Activated CD4-positive, alpha-beta T cell treated with anti-CD3 and anti-CD28 coated beads for 36 hours (primary cell): ENCODE measurements at regions of chr3 and their contacts with region 1.

Region 1: DNA sequence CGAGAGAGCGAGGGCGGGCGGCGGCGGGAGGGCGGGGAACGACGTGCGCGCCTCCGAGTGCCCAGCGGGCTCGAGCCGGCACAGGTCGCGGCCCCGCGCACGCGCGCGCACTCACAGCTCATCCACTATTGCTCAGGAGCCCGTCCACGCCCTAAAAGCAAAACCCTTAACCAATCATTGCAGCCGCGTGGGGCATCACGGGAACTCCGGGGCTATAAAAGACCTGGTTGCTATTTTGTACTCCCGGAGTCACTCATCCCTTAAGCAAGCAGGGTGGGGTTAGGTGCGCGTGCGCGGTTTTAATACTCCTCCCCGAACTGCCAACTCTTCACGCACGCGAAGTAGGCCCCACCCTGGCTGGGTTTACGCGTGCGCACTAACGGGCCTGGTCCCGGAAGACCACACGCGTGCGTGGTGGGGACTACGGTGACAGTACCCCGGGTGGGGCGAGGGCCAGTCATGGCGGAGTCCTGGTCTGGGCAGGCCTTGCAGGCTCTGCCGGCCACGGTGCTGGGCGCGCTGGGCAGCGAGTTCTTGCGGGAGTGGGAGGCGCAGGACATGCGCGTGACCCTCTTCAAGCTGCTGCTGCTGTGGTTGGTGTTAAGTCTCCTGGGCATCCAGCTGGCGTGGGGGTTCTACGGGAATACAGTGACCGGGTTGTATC is at the starts of genes RHOA and TCTA:
- DNase-seq: peak; percentile 99
- ATAC-seq: peak; percentile 88
- H3K4me3 Mint-ChIP-seq: peak within 1 kb of the TSS; percentile 97
- H3K27ac Mint-ChIP-seq: peak within 1 kb of the TSS; percentile 97
- H3K4me1 Mint-ChIP-seq: peaks cover 63% of the 10 kb centered on the region
- H3K27me3 Mint-ChIP-seq: no peaks in the 10 kb centered on the region
- total RNA-seq, gene RHOA: 438 to 449 TPM
- total RNA-seq, gene TCTA: 9.4 TPM

Region 2: DNA sequence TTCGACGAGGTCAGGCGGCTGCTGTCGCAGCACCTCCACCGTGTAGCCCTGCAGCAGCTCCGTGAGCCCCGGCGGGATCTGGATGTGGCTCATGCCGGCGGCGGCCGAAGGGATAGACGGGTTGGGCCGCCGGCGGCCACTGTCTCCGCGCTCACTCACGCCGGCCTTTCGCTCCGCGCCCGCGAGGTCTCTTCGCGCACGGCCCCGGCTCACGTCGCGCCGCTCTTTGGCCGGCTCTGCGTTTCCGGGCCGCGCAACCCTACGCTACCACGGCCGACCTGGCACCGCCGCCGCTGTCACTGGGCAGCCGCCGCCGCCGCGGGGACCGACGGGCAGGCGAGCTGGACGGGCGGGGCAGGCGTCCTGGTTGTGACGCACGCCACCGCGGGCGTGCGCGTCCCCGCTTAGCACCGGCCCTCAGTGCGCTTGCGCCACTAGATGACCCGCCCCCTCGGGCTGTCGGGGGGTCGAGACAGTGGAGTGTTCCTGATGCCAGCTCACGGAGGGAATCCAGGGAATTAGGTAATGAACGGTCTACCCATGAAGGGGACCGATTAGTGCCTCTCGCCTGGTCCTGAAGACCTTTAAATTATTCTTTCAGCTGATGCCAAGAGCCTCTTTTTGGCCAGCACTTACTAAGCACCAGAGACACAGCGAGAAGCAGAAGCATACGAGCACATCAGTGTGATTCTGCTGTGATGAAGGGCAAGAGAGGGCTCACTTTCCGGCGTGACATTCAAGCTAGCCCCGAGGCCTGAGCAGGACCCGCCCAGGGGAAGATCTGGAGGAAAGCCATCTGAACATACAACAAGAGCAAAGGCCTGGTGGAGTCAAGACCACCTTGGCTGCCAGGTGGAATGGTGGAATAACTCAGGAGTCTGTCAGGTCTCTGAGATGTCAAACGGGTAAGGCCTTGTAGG is 564.3 kb before region 1 on chr3 and contains the start of gene PRKAR2A:
- CTCF ChIA-PET with region 1: no interaction called
- POLR2A ChIA-PET with region 1: no interaction called
- intact Hi-C with region 1: loop called in 1 of 2 experiments (anchors 1 kb)
- DNase-seq: peak; percentile 89
- ATAC-seq: peak; percentile 89
- H3K4me3 Mint-ChIP-seq: peak within 1 kb of the TSS; percentile 82
- H3K27ac Mint-ChIP-seq: peak within 1 kb of the TSS; percentile 87
- H3K4me1 Mint-ChIP-seq: peaks cover 26% of the 10 kb centered on the region
- H3K27me3 Mint-ChIP-seq: no peaks in the 10 kb centered on the region
- total RNA-seq, gene PRKAR2A: 28.7 to 35.2 TPM

Region 3: DNA sequence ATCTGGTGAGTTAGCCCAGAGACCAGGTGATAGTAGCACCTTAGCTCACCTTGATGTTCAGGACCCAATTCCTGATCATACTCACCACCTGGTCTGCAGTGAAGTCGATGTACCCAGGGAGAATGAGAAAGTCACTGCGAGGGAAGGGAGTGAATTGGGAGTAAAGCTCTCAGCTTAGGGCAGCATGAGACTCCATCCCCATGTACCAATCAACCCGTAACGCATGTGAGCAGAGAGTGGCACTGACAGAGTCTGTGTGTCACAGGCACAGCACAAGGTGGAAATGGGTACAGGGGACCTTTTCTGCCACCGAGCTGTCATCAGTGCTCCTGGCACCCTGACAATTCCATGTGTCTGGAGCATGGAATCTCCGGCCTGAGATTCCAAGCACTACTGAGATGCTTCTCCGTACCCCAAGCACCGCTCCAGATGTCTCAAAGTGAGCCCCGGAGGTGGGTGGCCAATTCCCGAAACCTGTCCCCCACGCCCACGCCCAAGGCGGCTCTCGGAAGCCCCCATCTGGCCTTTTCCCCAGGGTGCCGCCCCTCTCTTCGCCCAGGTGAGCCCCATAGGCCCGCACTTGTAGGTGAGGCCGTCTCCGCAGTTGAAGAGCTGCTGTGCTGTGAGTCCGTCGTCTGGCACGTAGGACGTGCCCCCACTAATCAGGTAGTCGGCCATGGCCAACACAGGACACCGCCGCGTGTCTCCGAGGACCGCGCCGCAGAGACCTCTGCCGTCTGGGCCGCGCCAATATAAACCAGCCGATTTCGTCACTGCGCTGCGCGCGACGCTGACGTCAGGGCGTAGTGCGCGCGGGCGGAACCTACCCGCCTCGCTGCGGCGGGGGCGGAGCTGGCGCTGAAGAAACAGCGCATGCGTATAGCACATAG is 383.2 kb before region 1 on chr3 and contains the start of gene IMPDH2:
- CTCF ChIA-PET with region 1: no interaction called
- POLR2A ChIA-PET with region 1: interaction called, 3 read pairs
- intact Hi-C with region 1: loop called in 1 of 2 experiments (anchors 1 kb)
- DNase-seq: peak; percentile 96
- ATAC-seq: peak; percentile 93
- H3K4me3 Mint-ChIP-seq: peak within 1 kb of the TSS; percentile 89
- H3K27ac Mint-ChIP-seq: peak within 1 kb of the TSS; percentile 97
- H3K4me1 Mint-ChIP-seq: peaks cover 53% of the 10 kb centered on the region
- H3K27me3 Mint-ChIP-seq: no peaks in the 10 kb centered on the region
- total RNA-seq, gene IMPDH2: 504 to 515 TPM

Region 4: GRCh38 chr3:49120438-49121131 is 291.5 kb before region 1 on chr3 and contains the start of gene USP19:
- CTCF ChIA-PET with region 1: no interaction called
- POLR2A ChIA-PET with region 1: no interaction called
- intact Hi-C with region 1: loop called in 1 of 2 experiments (anchors 1 kb)
- DNase-seq: peak; percentile 97
- ATAC-seq: peak; percentile 97
- H3K4me3 Mint-ChIP-seq: peak within 1 kb of the TSS; percentile 87
- H3K27ac Mint-ChIP-seq: peak within 1 kb of the TSS; percentile 88
- H3K4me1 Mint-ChIP-seq: peaks cover 19% of the 10 kb centered on the region
- H3K27me3 Mint-ChIP-seq: no peaks in the 10 kb centered on the region
- total RNA-seq, gene USP19: 45.2 to 45.9 TPM

Region 5: GRCh38 chr3:49358217-49358883 is 53.8 kb before region 1 on chr3 and contains the start of gene GPX1:
- CTCF ChIA-PET with region 1: no interaction called
- POLR2A ChIA-PET with region 1: no interaction called
- intact Hi-C with region 1: loop called (anchors 1 to 5 kb)
- DNase-seq: peak; percentile 92
- ATAC-seq: peak; percentile 85
- H3K4me3 Mint-ChIP-seq: peak within 1 kb of the TSS; percentile 94
- H3K27ac Mint-ChIP-seq: peak within 1 kb of the TSS; percentile 98
- H3K4me1 Mint-ChIP-seq: peaks cover 18% of the 10 kb centered on the region
- H3K27me3 Mint-ChIP-seq: no peaks in the 10 kb centered on the region
- total RNA-seq, gene GPX1: 182 to 306 TPM

Region 6: GRCh38 chr3:49428697-49429100 is 16.6 kb after region 1 on chr3:
- CTCF ChIA-PET with region 1: interaction called, 11 read pairs
- POLR2A ChIA-PET with region 1: interaction called, 8 read pairs
- intact Hi-C with region 1: loop called (anchors 1 kb)
- DNase-seq: no peak
- ATAC-seq: peak; percentile 2
- H3K4me3 Mint-ChIP-seq: peak overlapping the region; percentile 84
- H3K27ac Mint-ChIP-seq: peak overlapping the region; percentile 93
- H3K4me1 Mint-ChIP-seq: peaks cover 16% of the 10 kb centered on the region
- H3K27me3 Mint-ChIP-seq: no peaks in the 10 kb centered on the region

Region 7: DNA sequence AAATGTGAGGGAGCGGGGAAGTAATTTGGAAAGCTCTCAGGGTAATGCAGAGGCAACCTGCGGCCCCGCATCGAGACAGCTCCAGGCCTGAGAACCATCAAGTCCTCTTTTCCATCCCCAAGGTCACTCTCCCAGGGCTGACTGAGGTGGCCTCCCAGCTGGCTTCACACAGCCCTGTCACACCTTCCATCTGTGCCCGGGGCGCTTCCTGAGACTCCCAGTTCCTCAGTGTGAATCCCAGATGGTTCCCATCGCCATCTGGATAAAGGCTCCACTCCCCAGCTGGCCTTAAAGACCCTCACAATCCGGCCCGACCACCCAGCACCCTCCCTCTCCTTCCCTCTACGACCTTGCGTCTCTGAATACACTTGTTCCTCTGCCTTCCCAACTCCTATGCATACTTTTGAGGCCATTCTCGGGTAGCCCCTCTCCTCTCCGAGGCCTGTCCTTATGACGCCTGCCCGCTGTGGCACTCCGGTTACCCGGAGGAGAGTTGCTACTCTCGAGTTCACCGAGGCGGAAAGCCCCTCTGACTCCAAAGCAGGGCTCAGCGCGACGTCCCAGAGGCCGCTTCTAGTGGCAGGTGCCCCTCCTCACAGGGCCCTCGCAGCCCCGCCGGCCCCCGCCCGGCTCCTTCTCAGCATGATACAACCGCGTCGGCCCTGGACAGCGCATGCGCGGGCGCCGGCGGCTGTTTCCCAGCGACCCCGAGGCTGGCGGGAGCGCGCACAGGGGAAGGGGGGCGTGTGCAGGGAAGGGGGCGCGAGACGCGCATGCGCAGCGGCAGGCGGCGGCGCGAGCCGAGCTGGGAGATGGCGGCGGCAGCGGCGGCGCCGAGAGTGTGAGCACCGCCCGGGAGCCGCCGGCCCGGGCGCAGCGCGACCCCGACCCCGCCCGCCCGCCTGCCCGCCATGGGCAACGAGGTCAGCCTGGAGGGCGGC is 141.9 kb after region 1 on chr3 and contains the start of gene BSN:
- CTCF ChIA-PET with region 1: no interaction called
- POLR2A ChIA-PET with region 1: no interaction called
- intact Hi-C with region 1: loop called in 1 of 2 experiments (anchors 1 kb)
- DNase-seq: peak; percentile 95
- ATAC-seq: peak; percentile 92
- H3K4me3 Mint-ChIP-seq: peak within 1 kb of the TSS; percentile 72
- H3K27ac Mint-ChIP-seq: peak within 1 kb of the TSS; percentile 24
- H3K4me1 Mint-ChIP-seq: peaks cover 11% of the 10 kb centered on the region
- H3K27me3 Mint-ChIP-seq: peaks cover 34% of the 10 kb centered on the region
- total RNA-seq, gene BSN: 0.09 to 0.11 TPM